ENCODE measurements at regions of chr1 and their contacts with region 1.

Region 1: GRCh38 chr1:77143529-77144121 is 75.6 kb downstream of the PIGK start:
- DNase-seq: no peak
- H3K4me3 ChIP-seq: no peak overlapping the region
- H3K27ac ChIP-seq: no peak overlapping the region
- H3K4me1 ChIP-seq: no peaks in the 10 kb centered on the region
- H3K27me3 ChIP-seq: no peaks in the 10 kb centered on the region
- CTCF ChIP-seq: peak in 2 of 3 experiments; percentile 19 to 23
- EP300 ChIP-seq: no peak
- POLR2A ChIP-seq: no peak

Region 2: DNA sequence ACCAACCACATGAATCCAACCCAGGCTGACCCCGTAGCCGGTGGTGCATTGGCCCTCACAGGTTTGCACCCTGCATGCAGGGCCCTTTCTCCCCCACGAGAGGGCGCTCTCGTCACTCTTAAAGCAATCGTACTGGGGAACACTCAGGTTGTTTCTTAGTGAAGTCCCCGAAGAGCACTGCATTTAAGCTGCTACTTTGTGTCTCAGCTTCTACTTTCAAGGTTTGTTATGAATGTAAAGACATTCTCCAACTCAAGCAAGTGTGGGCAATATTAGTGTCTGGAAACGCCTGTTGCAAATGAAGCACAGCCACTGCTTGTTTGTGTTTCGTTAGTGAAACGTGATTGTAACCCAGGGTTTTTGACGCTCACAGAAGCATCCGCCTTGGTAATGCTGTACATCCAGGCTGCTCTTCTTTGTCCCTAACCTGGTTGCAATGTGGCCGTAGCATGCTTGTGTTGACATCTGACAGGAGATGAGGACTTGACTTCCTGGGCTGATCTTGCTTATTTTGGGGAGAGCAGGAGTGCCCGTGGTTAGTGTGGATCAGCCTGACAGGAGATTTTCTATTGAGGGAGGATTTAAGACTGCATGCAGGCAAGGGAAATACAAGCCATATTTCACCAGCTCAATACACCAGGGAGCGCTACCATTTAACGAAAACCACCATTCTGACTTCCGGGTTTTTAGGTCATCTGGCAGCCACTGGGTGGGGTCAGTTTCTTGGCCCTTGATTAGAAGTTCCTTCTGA is 989.2 kb before region 1 on chr1:
- intact Hi-C with region 1: loop called (anchors 10 kb)
- DNase-seq: no peak
- H3K4me3 ChIP-seq: peak overlapping the region; percentile 37 to 50 (median 40)
- H3K27ac ChIP-seq: peak overlapping the region; percentile 0 to 51 (median 8)
- H3K4me1 ChIP-seq: peaks cover 12 to 18% (median 16%) of the 10 kb centered on the region in 4 donors
- H3K27me3 ChIP-seq: no peaks in the 10 kb centered on the region
- CTCF ChIP-seq: peak; percentile 90 to 97 (median 96)
- EP300 ChIP-seq: no peak
- POLR2A ChIP-seq: no peak

Region 3: DNA sequence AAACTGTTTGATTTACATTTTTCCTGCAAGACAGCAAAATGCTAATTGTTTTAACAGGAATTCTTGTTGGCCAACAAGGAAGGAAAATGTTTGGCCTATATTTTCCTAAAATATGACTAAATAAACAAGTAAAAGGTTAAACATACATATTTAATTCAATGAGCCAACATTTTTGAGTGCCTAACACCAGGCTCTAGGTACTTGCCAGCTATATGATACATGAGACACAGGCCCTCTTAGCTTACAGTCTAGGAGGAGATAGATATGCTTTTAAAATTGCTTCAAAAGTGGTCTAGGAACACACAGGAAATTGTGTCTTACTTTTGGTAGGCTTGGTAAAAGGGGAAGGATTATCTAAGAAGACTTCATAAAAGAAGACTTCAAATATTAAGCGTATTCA is 24.7 kb after region 1 on chr1:
- intact Hi-C with region 1: no loop called
- DNase-seq: no peak
- H3K4me3 ChIP-seq: no peak overlapping the region
- H3K27ac ChIP-seq: no peak overlapping the region
- H3K4me1 ChIP-seq: no peaks in the 10 kb centered on the region
- H3K27me3 ChIP-seq: no peaks in the 10 kb centered on the region
- CTCF ChIP-seq: no peak
- EP300 ChIP-seq: no peak
- POLR2A ChIP-seq: no peak

Region 4: DNA sequence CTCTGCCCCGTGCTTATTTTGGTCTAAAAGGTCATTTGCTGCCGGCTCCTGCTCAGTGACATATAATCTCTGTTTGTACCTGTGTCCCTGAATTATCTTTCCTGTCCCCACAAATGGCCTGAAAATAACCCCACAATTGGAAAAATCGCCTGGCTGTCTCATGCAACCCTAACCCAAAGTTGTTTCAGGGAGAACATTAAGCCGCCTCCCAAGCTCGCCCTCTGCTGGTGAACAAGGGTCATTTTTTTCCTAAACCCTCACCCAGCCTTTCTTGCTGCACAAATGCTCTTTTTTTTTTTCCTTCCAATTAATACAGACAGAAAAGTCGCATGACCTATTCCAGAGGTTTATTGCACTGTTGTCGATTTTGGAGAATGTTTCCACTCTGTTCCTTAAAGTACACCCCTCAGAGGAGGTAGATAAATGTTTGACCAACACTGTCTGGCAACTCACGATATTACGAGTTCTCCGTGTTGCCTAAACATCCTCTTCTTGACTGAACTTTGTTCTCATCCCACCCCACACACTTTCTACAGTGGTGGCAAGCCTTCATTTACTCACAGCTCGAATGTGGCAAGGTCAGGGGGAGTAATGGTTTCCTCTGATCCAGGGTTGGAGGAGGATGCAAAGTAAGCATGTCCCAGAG is 390.2 kb after region 1 on chr1:
- intact Hi-C with region 1: loop called (anchors 5 kb)
- DNase-seq: no peak
- H3K4me3 ChIP-seq: no peak overlapping the region
- H3K27ac ChIP-seq: no peak overlapping the region
- H3K4me1 ChIP-seq: peaks cover 0 to 9% (median 3%) of the 10 kb centered on the region in 4 donors
- H3K27me3 ChIP-seq: no peaks in the 10 kb centered on the region
- CTCF ChIP-seq: peak; percentile 69 to 86 (median 85)
- EP300 ChIP-seq: peak; percentile 7
- POLR2A ChIP-seq: no peak

Measured in esophagus muscularis mucosa (tissue), 4 donors.